ENCODE measurements at regions of chr4 and their contacts with region 1.

Region 1: DNA sequence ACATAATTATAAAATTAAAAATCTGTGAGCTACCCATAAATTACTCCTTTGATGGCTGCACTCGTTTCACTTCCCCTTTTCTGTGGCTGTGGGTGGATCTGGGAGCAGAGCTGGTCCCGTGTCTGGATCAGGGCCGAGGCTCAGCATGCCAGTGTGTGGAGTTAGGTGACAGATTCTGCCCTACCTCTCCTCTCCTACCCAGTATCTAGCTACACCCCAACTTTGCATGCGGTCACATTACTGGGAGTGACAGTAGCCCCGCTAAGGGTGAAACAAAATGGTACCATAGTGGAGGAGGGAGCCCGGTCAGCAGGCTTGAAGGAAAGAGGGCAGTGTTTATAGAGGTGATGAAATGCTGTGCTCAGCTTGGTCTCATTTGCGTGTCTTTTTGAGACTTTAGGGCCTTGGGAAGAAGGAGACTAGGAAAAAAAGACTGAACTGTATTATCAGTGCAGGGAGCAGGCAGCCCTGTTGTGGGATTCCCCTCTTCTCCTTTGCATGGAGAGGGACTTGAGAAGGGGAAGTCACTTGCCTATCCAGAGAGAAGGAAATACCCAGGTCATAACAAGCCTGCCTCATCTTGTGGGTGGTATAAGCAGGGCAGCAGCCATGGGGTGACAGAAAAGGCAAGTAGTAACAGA is 48.4 kb downstream of the ARHGAP10 start:
- DNase-seq: peak; percentile 76 to 94 (median 79)
- H3K4me3 ChIP-seq: peak overlapping the region; percentile 39 to 78 (median 74)
- H3K4me3 Mint-ChIP-seq: peak overlapping the region; percentile 70 to 86
- H3K27ac ChIP-seq: peak overlapping the region; percentile 72 to 94
- H3K27ac Mint-ChIP-seq: peak overlapping the region; percentile 80 to 94 (median 90)
- H3K4me1 ChIP-seq: peaks cover 21 to 22% of the 10 kb centered on the region in 2 donors
- H3K4me1 Mint-ChIP-seq: peaks cover 22% of the 10 kb centered on the region
- H3K27me3 ChIP-seq: no peaks in the 10 kb centered on the region
- H3K27me3 Mint-ChIP-seq: peaks cover 0 to 3% (median 0%) of the 10 kb centered on the region in 3 donors
- CTCF ChIP-seq: no peak

Region 2: DNA sequence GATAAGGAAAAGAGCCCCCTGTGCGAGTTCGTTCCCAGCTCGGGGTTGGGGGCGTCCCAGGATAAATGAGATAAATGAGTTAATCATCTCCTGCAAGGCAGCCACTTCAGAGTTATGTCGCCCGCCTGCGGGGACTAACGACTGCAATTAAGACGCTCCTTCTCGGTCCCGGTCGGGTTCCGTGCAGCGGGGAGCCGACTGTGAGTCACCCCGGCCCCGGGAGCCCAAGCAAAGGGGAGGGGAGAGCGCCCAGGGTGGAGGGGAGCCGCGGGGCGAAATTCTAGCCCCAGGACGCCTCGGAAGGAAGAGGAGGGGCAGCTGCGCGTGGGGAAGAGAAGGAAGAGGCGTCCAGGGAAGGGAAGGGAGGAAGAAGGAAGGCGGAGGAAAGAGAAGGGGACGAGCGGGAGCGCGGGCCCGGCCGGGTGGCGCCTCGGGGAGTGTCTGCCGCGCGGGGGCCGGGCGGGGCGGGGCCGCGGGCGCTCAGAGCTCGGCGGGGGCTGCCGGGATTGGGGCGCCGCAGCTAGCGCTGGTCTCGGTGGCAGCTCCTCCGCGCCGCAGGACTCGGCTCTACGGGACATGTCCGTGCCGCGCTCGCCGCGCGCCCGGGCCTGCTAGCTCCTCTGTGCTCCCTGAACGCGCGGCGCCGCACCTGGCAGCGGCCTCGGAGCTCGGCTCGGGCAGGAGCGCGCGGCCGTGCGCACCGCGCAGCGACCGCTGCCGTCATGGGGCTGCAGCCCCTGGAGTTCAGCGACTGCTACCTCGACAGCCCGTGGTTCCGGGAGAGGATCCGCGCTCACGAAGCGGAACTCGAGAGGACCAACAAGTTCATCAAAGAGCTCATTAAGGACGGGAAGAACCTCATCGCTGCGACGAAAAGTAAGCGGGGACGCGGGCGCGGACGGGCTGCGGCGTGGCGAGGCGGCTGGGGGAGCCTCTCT is 48.4 kb before region 1 on chr4 and contains the start of gene ARHGAP10:
- intact Hi-C with region 1: loop called in 1 of 2 experiments (anchors 5 kb)
- DNase-seq: peak; percentile 74 to 82 (median 79)
- H3K4me3 ChIP-seq: peak within 1 kb of the TSS; percentile 70 to 87 (median 78)
- H3K4me3 Mint-ChIP-seq: peak within 1 kb of the TSS; percentile 97 to 98
- H3K27ac ChIP-seq: peak within 1 kb of the TSS; percentile 0 to 69
- H3K27ac Mint-ChIP-seq: peak within 1 kb of the TSS; percentile 43 to 90 (median 78)
- H3K4me1 ChIP-seq: peaks cover 19 to 31% of the 10 kb centered on the region in 2 donors
- H3K4me1 Mint-ChIP-seq: peaks cover 26% of the 10 kb centered on the region
- H3K27me3 ChIP-seq: peaks cover 0 to 5% of the 10 kb centered on the region in 2 donors
- H3K27me3 Mint-ChIP-seq: peaks cover 5 to 17% (median 14%) of the 10 kb centered on the region in 3 donors
- CTCF ChIP-seq: no peak
- polyA plus RNA-seq, gene ARHGAP10: 1.7 to 4.3 (median 3.0) TPM

Region 3: GRCh38 chr4:147831551-147832177 is 51.4 kb after region 1 on chr4:
- intact Hi-C with region 1: loop called in 1 of 2 experiments (anchors 5 kb)
- DNase-seq: peak; percentile 93 to 98 (median 97)
- H3K4me3 ChIP-seq: peak overlapping the region in 1 of 3 experiments; percentile 56
- H3K4me3 Mint-ChIP-seq: peak overlapping the region; percentile 64 to 84
- H3K27ac ChIP-seq: peak overlapping the region; percentile 91 to 99
- H3K27ac Mint-ChIP-seq: peak overlapping the region; percentile 97 to 99 (median 98)
- H3K4me1 ChIP-seq: peaks cover 52 to 59% of the 10 kb centered on the region in 2 donors
- H3K4me1 Mint-ChIP-seq: peaks cover 56% of the 10 kb centered on the region
- H3K27me3 ChIP-seq: no peaks in the 10 kb centered on the region
- H3K27me3 Mint-ChIP-seq: no peaks in the 10 kb centered on the region
- CTCF ChIP-seq: no peak